ENCODE measurements at regions of chr7 and their contacts with region 1.

Region 1: GRCh38 chr7:116173051-116174028 is 37.0 kb upstream of the TES start:
- DNase-seq: peak; percentile 21 to 73
- ATAC-seq: peak; percentile 16 to 50; a peak in 3 of 6 replicates
- H3K4me3 ChIP-seq: no peak overlapping the region
- H3K27ac ChIP-seq: peak overlapping the region in 1 of 2 experiments; percentile 36; a peak in 1 of 6 replicates
- H3K4me1 ChIP-seq: peaks cover 56% of the 10 kb centered on the region
- CTCF ChIP-seq: peak; percentile 86
- EP300 ChIP-seq: no peak
- POLR2A ChIP-seq: no peak
- RAD21 ChIP-seq: peak; percentile 92

Region 2: GRCh38 chr7:116230191-116231005 is 57.1 kb after region 1 on chr7:
- CTCF ChIA-PET with region 1: interaction called, 385 read pairs
- POLR2A ChIA-PET with region 1: interaction called, 3 read pairs
- DNase-seq: no peak
- ATAC-seq: peak; percentile 39 to 63; a peak in 4 of 6 replicates
- H3K4me3 ChIP-seq: no peak overlapping the region
- H3K27ac ChIP-seq: peak overlapping the region; percentile 74 to 89; a peak in 5 of 6 replicates
- H3K4me1 ChIP-seq: peaks cover 63% of the 10 kb centered on the region
- CTCF ChIP-seq: no peak
- EP300 ChIP-seq: no peak
- POLR2A ChIP-seq: no peak
- RAD21 ChIP-seq: no peak

Region 3: GRCh38 chr7:116242178-116242577 is 68.8 kb after region 1 on chr7:
- CTCF ChIA-PET with region 1: interaction called, 385 read pairs
- POLR2A ChIA-PET with region 1: no interaction called
- DNase-seq: no peak
- ATAC-seq: 0 out of 6 replicates have a peak, but pooled peaks of 1 of the 2 experiments have one; percentile 38
- H3K4me3 ChIP-seq: no peak overlapping the region
- H3K27ac ChIP-seq: no peak overlapping the region
- H3K4me1 ChIP-seq: peaks cover 10% of the 10 kb centered on the region
- CTCF ChIP-seq: peak; percentile 29; the same call in 2 of the 3 replicates
- EP300 ChIP-seq: no peak
- POLR2A ChIP-seq: no peak
- RAD21 ChIP-seq: peak; percentile 35 to 53; a peak in 3 of 5 replicates

Measured in A549 (cell line).